ENCODE measurements at regions of chr20 and their contacts with region 1.

Region 1: DNA sequence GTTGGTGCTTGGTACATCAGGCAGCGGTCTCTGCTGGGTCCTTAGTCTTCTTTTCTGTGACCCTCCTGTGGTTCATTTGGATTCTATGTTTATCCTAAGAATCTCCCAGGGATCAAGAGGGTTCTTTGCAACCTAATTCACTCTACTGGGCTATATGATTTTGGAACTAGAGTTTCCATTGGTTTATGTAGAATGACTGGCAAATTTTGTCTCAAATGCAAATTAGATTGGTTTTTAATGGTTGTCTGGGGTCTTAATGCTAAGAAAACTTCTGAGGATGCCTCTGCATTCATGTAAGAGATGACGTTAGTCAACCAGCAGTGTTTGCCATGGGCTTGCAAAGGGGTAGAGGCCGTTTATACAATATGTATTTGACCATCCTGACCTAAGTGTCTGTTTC is 129.8 kb upstream of the ZFP64 start:
- DNase-seq: no peak
- H3K4me3 ChIP-seq: no peak overlapping the region
- H3K27ac ChIP-seq: no peak overlapping the region
- H3K4me1 ChIP-seq: no peaks in the 10 kb centered on the region
- H3K27me3 ChIP-seq: no peaks in the 10 kb centered on the region
- CTCF ChIP-seq: no peak
- POLR2A ChIP-seq: no peak

Region 2: DNA sequence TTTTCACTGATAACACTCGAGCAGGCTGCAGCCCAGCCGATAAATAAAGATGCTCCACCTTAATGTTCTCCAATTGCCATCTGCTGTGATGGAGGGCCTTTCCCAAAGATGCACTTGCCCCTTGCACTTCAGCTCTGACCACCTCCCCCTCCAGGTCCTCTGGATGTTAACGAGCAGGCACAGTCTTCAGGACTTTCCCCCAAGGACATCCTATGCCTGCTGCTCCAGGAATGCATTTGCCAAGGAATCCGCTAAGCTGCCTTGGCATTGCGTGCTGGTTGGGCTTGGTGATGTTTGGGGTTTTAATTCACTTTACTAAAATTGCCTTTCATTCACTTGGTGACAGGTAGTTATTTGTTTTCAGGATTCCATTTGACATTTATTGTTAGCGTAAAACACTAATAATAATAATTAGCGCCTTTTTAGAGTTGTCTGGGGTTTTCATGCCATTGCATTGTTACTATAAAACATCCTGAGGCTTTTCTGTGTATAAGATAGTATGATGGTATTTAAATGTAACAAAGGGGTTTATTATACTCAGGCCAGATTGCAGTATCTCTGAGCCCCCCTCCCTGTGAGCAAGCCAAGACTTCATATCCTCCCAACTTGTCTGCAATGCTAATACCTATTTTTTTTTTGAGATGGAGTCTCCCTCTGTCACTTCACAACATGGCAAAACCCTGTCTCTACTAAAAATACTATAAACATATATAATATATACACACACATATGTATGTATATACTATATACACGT is 584.0 kb after region 1 on chr20:
- intact Hi-C with region 1: no loop called
- DNase-seq: no peak
- H3K4me3 ChIP-seq: no peak overlapping the region
- H3K27ac ChIP-seq: no peak overlapping the region
- H3K4me1 ChIP-seq: no peaks in the 10 kb centered on the region
- H3K27me3 ChIP-seq: no peaks in the 10 kb centered on the region
- CTCF ChIP-seq: no peak
- POLR2A ChIP-seq: no peak

Region 3: DNA sequence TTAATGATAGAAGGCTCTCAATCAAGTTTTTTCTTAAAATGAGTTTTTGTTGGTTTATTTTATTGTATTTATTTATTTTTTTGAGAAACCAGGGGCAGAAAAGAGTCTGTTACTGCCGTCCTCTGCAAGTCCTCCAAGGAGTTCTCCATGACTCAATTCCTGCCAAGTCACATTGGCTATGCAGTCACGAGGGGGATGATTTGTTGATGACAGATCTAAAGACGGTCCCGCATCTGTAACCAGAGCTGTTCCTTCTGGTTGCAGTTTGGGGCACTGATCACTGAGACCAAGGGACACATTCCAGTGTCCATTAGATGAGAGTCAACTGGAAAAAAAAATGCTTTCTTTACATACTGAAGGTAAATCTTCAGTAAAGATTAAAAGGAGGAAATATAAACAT is 636.8 kb after region 1 on chr20:
- intact Hi-C with region 1: no loop called
- DNase-seq: no peak
- H3K4me3 ChIP-seq: no peak overlapping the region
- H3K27ac ChIP-seq: no peak overlapping the region
- H3K4me1 ChIP-seq: no peaks in the 10 kb centered on the region
- H3K27me3 ChIP-seq: no peaks in the 10 kb centered on the region
- CTCF ChIP-seq: no peak
- POLR2A ChIP-seq: no peak

Region 4: DNA sequence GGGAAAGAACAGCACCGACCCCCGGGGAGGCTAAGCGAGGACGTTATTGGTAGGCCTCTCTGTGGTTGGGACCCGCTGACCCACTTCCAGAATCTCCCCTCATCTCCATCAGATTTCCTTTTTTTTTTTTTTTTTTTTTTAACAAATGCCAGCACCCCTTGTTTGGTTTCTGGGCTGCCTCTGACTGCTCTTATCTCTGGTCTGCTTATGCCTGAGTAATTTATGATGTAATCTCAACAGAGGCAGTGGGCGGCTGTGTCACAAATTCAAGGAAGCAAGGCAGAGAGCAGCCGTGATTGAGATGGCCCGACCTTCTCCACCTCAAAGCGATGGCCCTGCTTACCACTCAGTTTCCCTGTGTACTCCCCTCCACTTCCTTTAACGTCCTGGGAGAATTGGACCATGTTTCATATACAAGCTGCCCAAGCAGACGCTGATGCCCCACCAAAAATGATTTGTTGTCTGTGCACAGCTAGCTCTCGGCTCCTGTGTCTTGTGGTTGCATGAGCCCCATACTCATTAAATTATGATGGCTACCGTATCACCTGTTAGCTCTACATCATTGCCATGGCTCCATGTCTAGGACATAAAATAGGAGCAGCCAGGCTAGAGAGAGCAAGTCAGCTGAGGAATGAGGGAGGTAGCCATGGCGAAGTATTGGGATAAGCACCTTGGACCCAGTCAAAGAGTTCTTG is 1174.1 kb after region 1 on chr20:
- intact Hi-C with region 1: loop called (anchors 5 kb)
- DNase-seq: no peak
- H3K4me3 ChIP-seq: no peak overlapping the region
- H3K27ac ChIP-seq: no peak overlapping the region
- H3K4me1 ChIP-seq: no peaks in the 10 kb centered on the region
- H3K27me3 ChIP-seq: no peaks in the 10 kb centered on the region
- CTCF ChIP-seq: no peak
- POLR2A ChIP-seq: no peak

Measured in breast epithelium (tissue), 4 donors.